ENCODE measurements at regions of chr11 and their contacts with region 1.

Region 1: DNA sequence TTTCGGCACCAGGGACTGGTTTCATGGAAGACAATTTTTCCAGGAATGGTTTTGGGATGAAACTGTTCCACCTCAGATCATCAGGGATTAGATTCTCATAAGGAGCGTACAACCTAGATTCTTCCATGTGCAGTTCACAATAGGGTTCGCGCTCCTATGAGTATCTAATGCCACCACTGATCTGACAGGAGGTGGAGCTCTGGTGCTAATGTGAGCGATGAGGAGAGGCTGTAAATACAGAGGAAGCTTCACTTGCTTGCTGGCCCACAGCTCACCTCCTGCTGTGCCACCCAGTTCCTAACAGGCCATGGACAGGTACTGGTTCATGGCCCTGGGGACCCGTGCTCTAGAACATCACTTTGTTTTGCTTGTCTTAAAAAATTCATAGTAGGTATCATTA is 41.8 kb upstream of the AMPD3 start:
- DNase-seq: peak; percentile 83
- ATAC-seq: peak; percentile 88
- H3K4me3 ChIP-seq: no peak overlapping the region
- H3K4me3 Mint-ChIP-seq: no peak overlapping the region
- H3K27ac ChIP-seq: no peak overlapping the region
- H3K27ac Mint-ChIP-seq: no peak overlapping the region
- H3K4me1 ChIP-seq: peaks cover 19 to 26% of the 10 kb centered on the region in 2 donors
- H3K4me1 Mint-ChIP-seq: peaks cover 26% of the 10 kb centered on the region
- H3K27me3 ChIP-seq: no peaks in the 10 kb centered on the region
- H3K27me3 Mint-ChIP-seq: no peaks in the 10 kb centered on the region
- CTCF ChIP-seq: peak; percentile 59

Region 2: DNA sequence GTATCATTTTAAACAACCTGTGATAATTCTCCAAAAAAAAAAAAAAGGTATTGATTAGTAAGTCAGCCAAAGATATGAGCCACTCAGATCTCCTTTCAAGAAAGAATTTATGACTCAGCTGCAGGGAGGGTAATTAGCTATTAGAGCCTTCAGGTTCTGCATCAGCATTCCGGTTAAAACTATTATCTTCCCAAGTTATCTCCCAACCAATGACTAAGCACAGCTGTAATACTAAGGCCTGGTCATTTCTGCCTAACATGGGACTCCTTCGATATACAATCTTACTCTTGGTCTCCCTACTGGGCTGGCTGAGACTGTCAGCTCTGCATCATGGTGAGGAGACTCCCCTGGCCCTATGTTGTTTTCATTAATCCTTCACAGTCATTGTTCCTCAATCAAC is 179.7 kb before region 1 on chr11:
- CTCF ChIA-PET with region 1: no interaction called
- POLR2A ChIA-PET with region 1: no interaction called
- intact Hi-C with region 1: no loop called
- DNase-seq: no peak
- ATAC-seq: no peak
- H3K4me3 ChIP-seq: no peak overlapping the region
- H3K4me3 Mint-ChIP-seq: no peak overlapping the region
- H3K27ac ChIP-seq: no peak overlapping the region
- H3K27ac Mint-ChIP-seq: no peak overlapping the region
- H3K4me1 ChIP-seq: no peaks in the 10 kb centered on the region
- H3K4me1 Mint-ChIP-seq: no peaks in the 10 kb centered on the region
- H3K27me3 ChIP-seq: no peaks in the 10 kb centered on the region
- H3K27me3 Mint-ChIP-seq: peaks cover 4% of the 10 kb centered on the region
- CTCF ChIP-seq: no peak

Region 3: DNA sequence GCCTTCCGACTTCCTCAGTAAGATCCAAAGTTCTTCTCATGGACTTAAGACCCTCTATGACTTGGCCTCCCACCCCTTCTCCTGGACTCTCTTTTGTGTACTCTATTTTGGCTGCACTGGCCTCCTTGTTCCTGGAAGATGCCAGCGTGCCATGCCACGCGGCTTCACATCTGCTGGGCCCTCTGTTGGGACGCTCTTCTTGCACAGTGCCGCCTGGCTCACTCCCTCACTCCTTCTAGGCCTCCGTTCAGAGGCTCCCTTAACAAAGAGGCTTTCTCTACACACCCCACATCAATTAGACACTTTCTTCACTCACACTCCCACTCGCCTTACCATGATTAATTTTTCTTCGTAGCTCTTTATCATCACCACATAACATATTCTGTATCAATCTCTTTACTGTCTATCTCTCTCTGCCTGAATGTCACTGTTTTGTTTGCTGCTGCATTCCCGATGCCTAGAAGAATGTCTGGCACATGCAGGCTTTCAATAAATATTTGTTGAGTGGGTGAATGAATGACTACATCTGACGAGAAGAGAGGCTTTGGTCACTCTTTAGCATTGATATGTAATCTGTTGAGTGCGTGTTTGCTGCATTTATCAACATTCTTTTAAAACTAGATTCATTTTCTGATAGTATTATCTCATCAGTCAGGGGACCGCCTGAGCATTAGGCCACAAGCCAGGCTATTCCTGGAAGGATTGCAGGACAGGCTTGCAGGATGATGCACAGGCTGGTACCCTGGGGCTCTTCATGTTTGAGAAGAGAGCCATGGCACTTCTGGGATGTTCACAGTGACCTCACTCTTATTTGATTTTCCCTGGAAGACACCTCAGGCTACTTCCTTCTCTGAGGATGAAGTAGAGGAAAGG is 18.8 kb before region 1 on chr11:
- CTCF ChIA-PET with region 1: no interaction called
- POLR2A ChIA-PET with region 1: no interaction called
- intact Hi-C with region 1: no loop called
- DNase-seq: no peak
- ATAC-seq: no peak
- H3K4me3 ChIP-seq: no peak overlapping the region
- H3K4me3 Mint-ChIP-seq: no peak overlapping the region
- H3K27ac ChIP-seq: no peak overlapping the region
- H3K27ac Mint-ChIP-seq: no peak overlapping the region
- H3K4me1 ChIP-seq: no peaks in the 10 kb centered on the region
- H3K4me1 Mint-ChIP-seq: no peaks in the 10 kb centered on the region
- H3K27me3 ChIP-seq: peaks cover 0 to 12% (median 4%) of the 10 kb centered on the region in 4 experiments
- H3K27me3 Mint-ChIP-seq: peaks cover 43% of the 10 kb centered on the region
- CTCF ChIP-seq: no peak

Region 4: DNA sequence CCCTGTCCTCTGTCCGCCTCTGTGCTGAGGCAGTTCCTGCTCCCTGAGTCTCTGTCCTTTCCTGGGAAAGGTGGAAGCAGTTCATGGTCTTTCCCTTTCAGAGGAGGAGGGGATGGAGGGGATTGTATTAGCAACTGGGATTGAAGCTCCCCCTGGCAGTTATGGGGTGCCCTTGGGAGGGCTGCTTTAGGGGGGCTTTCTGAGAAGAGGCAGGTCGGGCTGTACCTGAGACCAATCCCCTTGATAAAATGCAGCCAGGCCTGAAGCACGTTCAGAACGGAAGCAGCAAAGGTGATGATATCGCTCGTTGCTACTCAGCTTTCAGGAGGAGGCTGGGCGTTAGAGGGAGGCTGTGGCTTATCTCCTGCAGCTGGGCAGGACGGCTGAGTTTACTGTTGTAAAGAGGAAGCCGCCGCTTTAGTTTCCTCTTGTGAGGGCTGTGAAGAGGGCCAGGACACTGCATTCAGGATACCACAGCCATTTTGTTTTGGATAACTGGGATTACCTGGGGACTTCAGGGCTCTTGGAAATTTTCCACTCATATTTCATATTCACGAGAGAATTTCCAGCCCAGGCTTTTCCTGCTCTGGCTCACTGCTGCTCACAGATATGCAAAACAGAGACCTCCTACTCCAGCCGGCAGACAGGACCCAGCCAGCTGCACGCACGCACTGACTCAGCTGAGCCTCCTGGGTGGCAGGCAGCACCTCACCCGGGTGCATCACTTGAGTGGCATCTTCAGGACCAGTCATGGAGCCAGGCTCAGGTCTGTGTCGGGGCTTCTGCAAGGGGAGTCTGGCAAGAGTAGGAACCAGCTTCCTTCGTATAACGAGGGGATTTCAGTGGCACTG is 42.6 kb after region 1 on chr11:
- CTCF ChIA-PET with region 1: interaction called, 146 read pairs
- POLR2A ChIA-PET with region 1: no interaction called
- intact Hi-C with region 1: loop called (anchors 1 kb)
- DNase-seq: peak; percentile 85
- ATAC-seq: peak; percentile 72
- H3K4me3 ChIP-seq: peak overlapping the region; percentile 52 to 69 (median 66)
- H3K4me3 Mint-ChIP-seq: peak overlapping the region; percentile 96
- H3K27ac ChIP-seq: peak overlapping the region; percentile 75 to 98
- H3K27ac Mint-ChIP-seq: peak overlapping the region; percentile 98
- H3K4me1 ChIP-seq: peaks cover 69 to 83% of the 10 kb centered on the region in 2 donors
- H3K4me1 Mint-ChIP-seq: peaks cover 81% of the 10 kb centered on the region
- H3K27me3 ChIP-seq: no peaks in the 10 kb centered on the region
- H3K27me3 Mint-ChIP-seq: no peaks in the 10 kb centered on the region
- CTCF ChIP-seq: no peak

Region 5: GRCh38 chr11:10502770-10503169 is 89.5 kb after region 1 on chr11:
- CTCF ChIA-PET with region 1: interaction called, 71 read pairs
- POLR2A ChIA-PET with region 1: no interaction called
- intact Hi-C with region 1: no loop called
- DNase-seq: peak; percentile 46
- ATAC-seq: peak; percentile 51
- H3K4me3 ChIP-seq: peak overlapping the region in 1 of 5 experiments; percentile 18
- H3K4me3 Mint-ChIP-seq: peak overlapping the region; percentile 20
- H3K27ac ChIP-seq: peak overlapping the region; percentile 38 to 65
- H3K27ac Mint-ChIP-seq: peak overlapping the region; percentile 81
- H3K4me1 ChIP-seq: peaks cover 21% of the 10 kb centered on the region in 2 donors
- H3K4me1 Mint-ChIP-seq: peaks cover 27% of the 10 kb centered on the region
- H3K27me3 ChIP-seq: no peaks in the 10 kb centered on the region
- H3K27me3 Mint-ChIP-seq: no peaks in the 10 kb centered on the region
- CTCF ChIP-seq: no peak

Region 6: GRCh38 chr11:10564696-10565318 is 151.5 kb after region 1 on chr11:
- CTCF ChIA-PET with region 1: interaction called, 17 read pairs
- POLR2A ChIA-PET with region 1: no interaction called
- intact Hi-C with region 1: no loop called
- DNase-seq: peak; percentile 55
- ATAC-seq: peak; percentile 43
- H3K4me3 ChIP-seq: no peak overlapping the region
- H3K4me3 Mint-ChIP-seq: no peak overlapping the region
- H3K27ac ChIP-seq: peak overlapping the region in 1 of 2 donors; percentile 14
- H3K27ac Mint-ChIP-seq: peak overlapping the region; percentile 71
- H3K4me1 ChIP-seq: peaks cover 17 to 35% of the 10 kb centered on the region in 2 donors
- H3K4me1 Mint-ChIP-seq: peaks cover 53% of the 10 kb centered on the region
- H3K27me3 ChIP-seq: no peaks in the 10 kb centered on the region
- H3K27me3 Mint-ChIP-seq: no peaks in the 10 kb centered on the region
- CTCF ChIP-seq: peak; percentile 22

Region 7: GRCh38 chr11:10727146-10727851 is 314.0 kb after region 1 on chr11:
- CTCF ChIA-PET with region 1: interaction called, 171 read pairs
- POLR2A ChIA-PET with region 1: no interaction called
- intact Hi-C with region 1: no loop called
- DNase-seq: no peak
- ATAC-seq: no peak
- H3K4me3 ChIP-seq: no peak overlapping the region
- H3K4me3 Mint-ChIP-seq: no peak overlapping the region
- H3K27ac ChIP-seq: no peak overlapping the region
- H3K27ac Mint-ChIP-seq: no peak overlapping the region
- H3K4me1 ChIP-seq: peaks cover 10 to 13% of the 10 kb centered on the region in 2 donors
- H3K4me1 Mint-ChIP-seq: peaks cover 31% of the 10 kb centered on the region
- H3K27me3 ChIP-seq: no peaks in the 10 kb centered on the region
- H3K27me3 Mint-ChIP-seq: no peaks in the 10 kb centered on the region
- CTCF ChIP-seq: no peak